ENCODE measurements at regions of chr17 and their contacts with region 1.

Region 1: DNA sequence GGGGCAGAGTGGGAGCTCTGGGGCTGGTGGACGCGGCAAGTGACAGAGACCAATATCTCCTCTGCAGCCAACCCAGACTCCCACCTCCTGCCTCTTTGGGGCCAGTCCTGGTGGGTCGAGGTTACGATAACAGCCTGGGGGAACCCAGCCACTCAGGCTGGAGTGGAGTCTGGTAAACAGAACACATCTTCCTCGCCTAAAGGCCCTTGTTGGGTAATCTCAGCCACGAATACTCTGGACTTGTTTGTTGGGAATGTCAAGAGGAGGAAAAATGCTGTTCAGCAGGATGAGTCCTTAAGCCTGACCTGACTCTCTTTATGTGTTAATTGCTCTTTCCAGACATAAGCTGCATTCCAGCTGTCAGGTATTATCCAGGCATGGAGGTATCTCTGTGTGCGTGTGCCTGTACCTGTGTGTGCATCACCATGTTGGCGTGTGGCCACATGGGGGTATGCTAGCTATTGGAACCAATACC is 8.0 kb upstream of the SPNS2 start:
- DNase-seq: peak; percentile 65 to 98
- H3K4me3 ChIP-seq: no peak overlapping the region; the same call in 1 of the 2 replicates
- H3K27ac ChIP-seq: peak overlapping the region; percentile 97
- H3K4me1 ChIP-seq: peaks cover 69% of the 10 kb centered on the region
- H3K27me3 ChIP-seq: no peaks in the 10 kb centered on the region
- CTCF ChIP-seq: no peak

Region 2: GRCh38 chr17:4501295-4501949 is 10.7 kb after region 1 on chr17:
- CTCF ChIA-PET with region 1: no interaction called
- POLR2A ChIA-PET with region 1: no interaction called
- intact Hi-C with region 1: no loop called
- DNase-seq: peak in 1 of 2 experiments; percentile 44
- H3K4me3 ChIP-seq: peak overlapping the region; percentile 81
- H3K27ac ChIP-seq: 0 out of 2 replicates have a peak overlapping the region, but pooled peaks have one; percentile 21
- H3K4me1 ChIP-seq: peaks cover 78% of the 10 kb centered on the region
- H3K27me3 ChIP-seq: no peaks in the 10 kb centered on the region
- CTCF ChIP-seq: no peak

Region 3: GRCh38 chr17:4520894-4521600 is 30.4 kb after region 1 on chr17:
- CTCF ChIA-PET with region 1: no interaction called
- POLR2A ChIA-PET with region 1: interaction called, 3 read pairs
- intact Hi-C with region 1: loop called (anchors 1 kb)
- DNase-seq: peak; percentile 89 to 93
- H3K4me3 ChIP-seq: no peak overlapping the region
- H3K27ac ChIP-seq: peak overlapping the region; percentile 87
- H3K4me1 ChIP-seq: peaks cover 54% of the 10 kb centered on the region
- H3K27me3 ChIP-seq: no peaks in the 10 kb centered on the region
- CTCF ChIP-seq: no peak

Measured in PC-9 (cell line).